ENCODE measurements at regions of chr3 and their contacts with region 1.

Region 1: GRCh38 chr3:177928156-177928873 is 607.9 kb upstream of the KCNMB2 start:
- DNase-seq: peak; percentile 2
- ATAC-seq: no peak
- H3K4me3 ChIP-seq: no peak overlapping the region
- H3K27ac ChIP-seq: no peak overlapping the region; the same call in 1 of the 2 replicates
- H3K4me1 ChIP-seq: no peaks in the 10 kb centered on the region
- H3K27me3 ChIP-seq: no peaks in the 10 kb centered on the region
- CTCF ChIP-seq: no peak

Region 2: DNA sequence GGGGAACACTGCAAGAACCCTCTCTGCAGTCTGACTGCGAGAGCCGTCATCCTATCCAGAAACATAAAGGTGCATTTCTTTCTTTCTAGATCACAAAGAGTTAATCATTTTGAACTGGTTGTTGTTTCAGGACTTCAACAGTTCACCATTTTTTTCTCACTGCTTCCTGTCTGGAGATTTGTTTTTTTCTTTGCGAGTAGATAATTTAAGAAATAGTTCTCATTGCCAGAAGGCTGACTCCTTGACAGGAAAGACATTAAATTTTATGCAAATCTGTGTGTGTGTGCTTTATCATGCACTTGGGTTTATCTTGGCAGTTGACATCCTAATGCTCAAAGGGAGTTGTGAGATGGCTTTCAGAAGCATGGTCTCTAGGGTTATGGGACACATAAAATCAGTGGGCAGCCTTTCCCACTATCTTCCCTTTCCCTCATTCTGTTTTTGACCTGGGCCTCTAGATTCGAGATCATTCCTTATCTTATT is 607.5 kb before region 1 on chr3:
- CTCF ChIA-PET with region 1: no interaction called
- POLR2A ChIA-PET with region 1: no interaction called
- in situ Hi-C with region 1: no loop called
- intact Hi-C with region 1: no loop called
- DNase-seq: no peak
- ATAC-seq: no peak
- H3K4me3 ChIP-seq: no peak overlapping the region
- H3K27ac ChIP-seq: peak overlapping the region; percentile 53
- H3K4me1 ChIP-seq: peaks cover 7% of the 10 kb centered on the region
- H3K27me3 ChIP-seq: no peaks in the 10 kb centered on the region
- CTCF ChIP-seq: no peak

Region 3: GRCh38 chr3:177917234-177917861 is 11.0 kb before region 1 on chr3:
- CTCF ChIA-PET with region 1: no interaction called
- POLR2A ChIA-PET with region 1: interaction called, 10 read pairs
- in situ Hi-C with region 1: no loop called
- intact Hi-C with region 1: no loop called
- DNase-seq: no peak
- ATAC-seq: no peak
- H3K4me3 ChIP-seq: no peak overlapping the region
- H3K27ac ChIP-seq: no peak overlapping the region
- H3K4me1 ChIP-seq: no peaks in the 10 kb centered on the region
- H3K27me3 ChIP-seq: no peaks in the 10 kb centered on the region
- CTCF ChIP-seq: no peak

Region 4: DNA sequence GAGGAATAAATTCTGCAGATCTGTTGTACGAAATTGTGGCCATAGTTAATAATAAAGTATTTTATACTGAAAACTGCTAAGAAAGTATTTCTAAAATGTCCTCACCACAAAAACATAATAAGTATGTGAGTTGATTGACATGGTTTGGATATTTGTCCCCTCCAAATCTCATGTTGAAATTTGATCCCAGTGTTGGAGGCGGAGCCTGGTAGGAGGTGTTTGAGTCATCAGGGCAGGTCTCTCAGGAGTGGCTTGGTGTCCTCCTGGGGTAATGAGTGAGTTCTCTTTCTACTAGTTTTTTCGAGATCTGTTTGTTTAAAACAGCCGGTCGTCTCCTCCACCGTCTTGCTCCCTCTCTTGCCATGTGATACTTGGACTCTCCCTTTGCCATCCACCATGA is 183.8 kb after region 1 on chr3:
- CTCF ChIA-PET with region 1: no interaction called
- POLR2A ChIA-PET with region 1: no interaction called
- in situ Hi-C with region 1: no loop called
- intact Hi-C with region 1: no loop called
- DNase-seq: no peak
- ATAC-seq: no peak
- H3K4me3 ChIP-seq: no peak overlapping the region
- H3K27ac ChIP-seq: no peak overlapping the region
- H3K4me1 ChIP-seq: no peaks in the 10 kb centered on the region
- H3K27me3 ChIP-seq: no peaks in the 10 kb centered on the region
- CTCF ChIP-seq: no peak

Measured in Panc1 (cell line).